Vagina (tissue), 2 donors: ENCODE measurements at regions of chr15 and their contacts with region 1.

Region 1: DNA sequence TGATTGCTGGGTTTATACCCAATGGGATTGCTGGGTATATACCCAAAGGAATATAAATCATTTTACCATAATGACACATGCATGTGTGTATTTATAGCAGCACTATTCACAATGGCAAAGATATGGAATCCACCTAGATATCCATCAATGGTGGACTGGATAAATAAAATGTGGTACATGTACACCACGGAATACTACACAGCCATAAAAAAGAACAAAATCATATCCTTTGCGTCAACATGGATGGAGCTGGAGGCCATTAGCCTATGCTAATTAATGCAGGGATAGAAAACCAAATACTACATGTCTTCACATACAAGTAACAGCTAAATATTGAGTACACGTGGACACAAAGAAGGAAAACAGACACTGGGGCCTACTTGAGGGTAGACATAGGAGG is 22.6 kb downstream of the MNS1 start:
- DNase-seq: no peak
- H3K4me3 ChIP-seq: no peak overlapping the region
- H3K27ac ChIP-seq: no peak overlapping the region
- H3K4me1 ChIP-seq: no peaks in the 10 kb centered on the region
- H3K27me3 ChIP-seq: no peaks in the 10 kb centered on the region
- CTCF ChIP-seq: no peak
- POLR2A ChIP-seq: no peak

Region 2: GRCh38 chr15:56425976-56426375 is 16.4 kb before region 1 on chr15:
- intact Hi-C with region 1: loop called (anchors 2 kb)
- DNase-seq: no peak
- H3K4me3 ChIP-seq: no peak overlapping the region
- H3K27ac ChIP-seq: no peak overlapping the region
- H3K4me1 ChIP-seq: no peaks in the 10 kb centered on the region
- H3K27me3 ChIP-seq: no peaks in the 10 kb centered on the region
- CTCF ChIP-seq: no peak
- POLR2A ChIP-seq: no peak

Region 3: GRCh38 chr15:57873564-57874209 is 1431.3 kb after region 1 on chr15:
- intact Hi-C with region 1: no loop called
- DNase-seq: no peak
- H3K4me3 ChIP-seq: no peak overlapping the region
- H3K27ac ChIP-seq: no peak overlapping the region
- H3K4me1 ChIP-seq: no peaks in the 10 kb centered on the region
- H3K27me3 ChIP-seq: no peaks in the 10 kb centered on the region
- CTCF ChIP-seq: no peak
- POLR2A ChIP-seq: no peak